H1 (cell line): ENCODE measurements at regions of chr9 and their contacts with region 1.

Region 1: DNA sequence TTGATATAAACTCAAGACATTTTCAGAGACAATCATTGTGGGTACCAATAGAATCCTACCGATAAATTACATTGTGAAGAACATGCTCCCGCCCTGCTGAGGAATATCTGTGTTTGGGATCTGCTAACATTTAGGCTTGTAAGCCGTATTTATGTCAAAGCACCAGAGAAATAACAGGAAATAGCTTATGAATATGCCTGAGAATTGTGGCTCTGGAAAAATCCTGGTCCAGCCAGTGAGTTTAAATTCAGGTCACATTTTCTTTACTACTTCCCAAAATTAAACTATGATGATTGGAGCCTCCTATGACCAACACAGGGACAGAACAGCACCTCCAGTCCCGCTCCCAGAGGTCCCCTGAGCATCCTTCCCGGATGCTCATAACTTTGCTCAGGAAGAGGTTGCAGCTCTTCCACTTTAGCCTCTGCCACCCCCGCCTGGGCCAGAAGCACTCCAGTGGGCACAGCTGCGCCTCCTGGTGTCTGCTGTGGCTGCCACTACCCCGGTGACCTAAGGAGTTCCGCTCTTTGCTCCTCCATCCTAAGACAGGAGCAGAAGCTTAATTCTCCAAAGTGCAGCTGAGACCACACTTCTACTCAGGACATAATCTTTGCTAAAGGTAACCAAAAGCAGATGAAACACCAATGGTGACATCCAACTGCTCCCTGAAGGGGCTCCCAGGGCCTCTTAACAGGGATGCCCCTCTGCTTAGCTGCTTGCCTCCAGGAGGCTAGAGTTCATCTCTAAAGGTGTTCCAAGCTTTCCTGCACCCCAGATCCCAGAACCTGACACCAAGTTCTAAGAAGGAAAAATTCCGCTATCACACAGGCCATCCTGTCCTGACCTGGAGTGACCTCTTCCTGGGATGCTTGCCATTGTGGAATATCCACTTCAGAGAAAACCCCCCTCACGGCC is 58.8 kb downstream of the SLC1A1 start:
- DNase-seq: peak in 1 of 2 experiments; percentile 82
- H3K4me3 ChIP-seq: no peak overlapping the region
- H3K27ac ChIP-seq: no peak overlapping the region
- H3K4me1 ChIP-seq: no peaks in the 10 kb centered on the region
- H3K27me3 ChIP-seq: no peaks in the 10 kb centered on the region
- CTCF ChIP-seq: peak; percentile 85 to 94 (median 87)
- EP300 ChIP-seq: peak in 1 of 2 experiments; percentile 62; a peak in 1 of 3 replicates
- POLR2A ChIP-seq: no peak
- RAD21 ChIP-seq: peak; percentile 78 to 84

Region 2: GRCh38 chr9:4435197-4435596 is 113.9 kb before region 1 on chr9:
- CTCF ChIA-PET with region 1: interaction called, 17 read pairs
- POLR2A ChIA-PET with region 1: no interaction called
- DNase-seq: no peak
- H3K4me3 ChIP-seq: no peak overlapping the region
- H3K27ac ChIP-seq: no peak overlapping the region
- H3K4me1 ChIP-seq: no peaks in the 10 kb centered on the region
- H3K27me3 ChIP-seq: no peaks in the 10 kb centered on the region
- CTCF ChIP-seq: no peak
- EP300 ChIP-seq: no peak
- POLR2A ChIP-seq: no peak
- RAD21 ChIP-seq: no peak

Region 3: DNA sequence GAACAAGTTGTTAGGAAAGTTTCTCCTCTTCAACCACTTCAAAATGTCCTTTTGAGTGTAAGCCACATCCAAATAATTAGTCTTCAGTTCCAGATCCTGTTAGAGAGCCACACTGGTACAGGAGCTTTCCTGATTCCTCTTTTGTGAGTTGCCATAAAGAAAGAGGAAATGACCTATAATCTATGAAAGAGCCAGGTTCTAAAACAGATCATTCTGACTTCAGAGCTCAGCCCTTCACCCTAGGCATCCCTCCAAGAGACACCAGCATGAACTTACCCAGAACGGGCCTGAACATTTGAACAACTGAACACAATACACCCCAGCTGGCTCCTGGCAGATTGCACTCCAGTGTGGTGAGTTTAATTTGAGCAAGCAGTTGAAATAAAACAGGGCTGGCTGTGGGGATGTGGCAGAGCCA is 33.1 kb before region 1 on chr9:
- CTCF ChIA-PET with region 1: interaction called, 23 read pairs
- POLR2A ChIA-PET with region 1: interaction called, 3 read pairs
- DNase-seq: no peak
- H3K4me3 ChIP-seq: no peak overlapping the region
- H3K27ac ChIP-seq: no peak overlapping the region
- H3K4me1 ChIP-seq: peaks cover 0 to 16% (median 13%) of the 10 kb centered on the region in 4 experiments; a peak in 5 of 7 replicates
- H3K27me3 ChIP-seq: no peaks in the 10 kb centered on the region; a peak in 1 of 7 replicates
- CTCF ChIP-seq: no peak
- EP300 ChIP-seq: no peak
- POLR2A ChIP-seq: no peak
- RAD21 ChIP-seq: no peak

Region 4: GRCh38 chr9:4538621-4539020 is 10.4 kb before region 1 on chr9:
- CTCF ChIA-PET with region 1: interaction called, 53 read pairs
- POLR2A ChIA-PET with region 1: interaction called, 3 read pairs
- DNase-seq: no peak
- H3K4me3 ChIP-seq: no peak overlapping the region
- H3K27ac ChIP-seq: no peak overlapping the region
- H3K4me1 ChIP-seq: peaks cover 0 to 3% (median under 1%) of the 10 kb centered on the region in 4 experiments; a peak in 3 of 7 replicates
- H3K27me3 ChIP-seq: no peaks in the 10 kb centered on the region
- CTCF ChIP-seq: no peak
- EP300 ChIP-seq: no peak
- POLR2A ChIP-seq: no peak
- RAD21 ChIP-seq: no peak

Region 5: GRCh38 chr9:4574657-4575243 is 25.7 kb after region 1 on chr9:
- CTCF ChIA-PET with region 1: interaction called, 10 read pairs
- POLR2A ChIA-PET with region 1: no interaction called
- DNase-seq: no peak
- H3K4me3 ChIP-seq: no peak overlapping the region
- H3K27ac ChIP-seq: no peak overlapping the region; the same call in 1 of the 2 replicates
- H3K4me1 ChIP-seq: no peaks in the 10 kb centered on the region; a peak in 2 of 7 replicates
- H3K27me3 ChIP-seq: no peaks in the 10 kb centered on the region
- CTCF ChIP-seq: no peak
- EP300 ChIP-seq: no peak
- POLR2A ChIP-seq: no peak
- RAD21 ChIP-seq: no peak

Region 6: GRCh38 chr9:4604678-4605095 is 55.6 kb after region 1 on chr9:
- CTCF ChIA-PET with region 1: interaction called, 20 read pairs
- POLR2A ChIA-PET with region 1: no interaction called
- DNase-seq: peak; percentile 43 to 81
- H3K4me3 ChIP-seq: no peak overlapping the region
- H3K27ac ChIP-seq: no peak overlapping the region
- H3K4me1 ChIP-seq: peaks cover 0 to 3% (median 0%) of the 10 kb centered on the region in 4 experiments; a peak in 2 of 7 replicates
- H3K27me3 ChIP-seq: no peaks in the 10 kb centered on the region
- CTCF ChIP-seq: peak in 2 of 3 experiments; percentile 64 to 75; a peak in 3 of 4 replicates
- EP300 ChIP-seq: no peak
- POLR2A ChIP-seq: no peak
- RAD21 ChIP-seq: peak; percentile 79 to 87